Right cardiac atrium (tissue), 5 donors: ENCODE measurements at regions of chr2 and their contacts with region 1.

Region 1: GRCh38 chr2:169528271-169528701 is 18.8 kb downstream of the KLHL41 start:
- DNase-seq: peak; percentile 61 to 83 (median 69)
- ATAC-seq: peak; percentile 69 to 79
- H3K4me3 ChIP-seq: no peak overlapping the region
- H3K27ac ChIP-seq: no peak overlapping the region
- H3K4me1 ChIP-seq: no peaks in the 10 kb centered on the region
- H3K27me3 ChIP-seq: no peaks in the 10 kb centered on the region

Region 2: GRCh38 chr2:169462896-169463695 is 65.2 kb before region 1 on chr2:
- intact Hi-C with region 1: no loop called
- DNase-seq: no peak
- ATAC-seq: peak; percentile 70 to 89
- H3K4me3 ChIP-seq: no peak overlapping the region
- H3K27ac ChIP-seq: no peak overlapping the region
- H3K4me1 ChIP-seq: no peaks in the 10 kb centered on the region
- H3K27me3 ChIP-seq: no peaks in the 10 kb centered on the region

Region 3: GRCh38 chr2:169983506-169983905 is 455.2 kb after region 1 on chr2:
- intact Hi-C with region 1: loop called in 1 of 4 experiments (anchors 5 kb)
- DNase-seq: no peak
- ATAC-seq: no peak
- H3K4me3 ChIP-seq: no peak overlapping the region
- H3K27ac ChIP-seq: no peak overlapping the region
- H3K4me1 ChIP-seq: peaks cover 1% of the 10 kb centered on the region
- H3K27me3 ChIP-seq: no peaks in the 10 kb centered on the region